ENCODE measurements at regions of chr1 and their contacts with region 1.

Region 1: GRCh38 chr1:165928075-165928731 is 100.8 kb downstream of the UCK2 start:
- DNase-seq: peak in 1 of 4 donors; percentile 29
- ATAC-seq: peak; percentile 58
- H3K4me3 ChIP-seq: no peak overlapping the region
- H3K27ac ChIP-seq: no peak overlapping the region
- H3K4me1 ChIP-seq: no peaks in the 10 kb centered on the region
- H3K27me3 ChIP-seq: peaks cover 0 to 11% of the 10 kb centered on the region in 2 donors
- CTCF ChIP-seq: peak; percentile 44 to 49

Region 2: GRCh38 chr1:165857046-165857801 is 71.0 kb before region 1 on chr1:
- intact Hi-C with region 1: no loop called
- DNase-seq: no peak
- ATAC-seq: peak; percentile 27
- H3K4me3 ChIP-seq: no peak overlapping the region
- H3K27ac ChIP-seq: no peak overlapping the region
- H3K4me1 ChIP-seq: peaks cover 5 to 49% of the 10 kb centered on the region in 2 donors
- H3K27me3 ChIP-seq: no peaks in the 10 kb centered on the region
- CTCF ChIP-seq: no peak

Region 3: DNA sequence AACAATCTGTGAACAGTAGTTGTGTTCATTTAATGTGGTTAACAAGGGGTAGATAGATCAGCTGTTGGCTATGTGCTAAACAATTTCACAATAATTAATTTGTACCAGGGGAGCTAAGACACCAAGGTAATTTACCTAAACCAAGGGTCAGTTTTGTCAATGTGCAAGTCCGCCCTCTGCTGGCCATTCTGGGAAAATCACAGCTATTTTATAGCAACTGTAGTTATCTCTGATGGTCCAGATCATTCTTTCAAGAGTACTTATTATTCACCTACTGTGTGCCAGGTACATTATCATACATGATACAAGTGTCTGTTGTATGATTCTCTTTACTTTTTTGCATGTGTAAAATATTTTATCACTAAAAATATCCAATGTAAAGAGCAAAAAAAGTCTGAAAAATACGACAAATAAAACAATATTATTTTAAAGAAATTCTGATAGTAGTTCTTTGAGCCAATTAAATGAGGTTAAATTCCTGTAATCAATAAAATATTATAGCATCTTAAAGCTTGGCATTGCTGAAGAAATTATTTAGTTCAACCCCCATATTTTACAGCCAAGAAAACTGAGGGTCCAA is 550.9 kb after region 1 on chr1:
- intact Hi-C with region 1: loop called in 1 of 2 experiments (anchors 10 kb)
- DNase-seq: peak in 2 of 4 donors; percentile 11 to 32
- ATAC-seq: peak; percentile 57
- H3K4me3 ChIP-seq: no peak overlapping the region
- H3K27ac ChIP-seq: no peak overlapping the region
- H3K4me1 ChIP-seq: no peaks in the 10 kb centered on the region
- H3K27me3 ChIP-seq: no peaks in the 10 kb centered on the region
- CTCF ChIP-seq: peak; percentile 59 to 79